PC-3 (cell line): ENCODE measurements at regions of chr3 and their contacts with region 1.

Region 1: DNA sequence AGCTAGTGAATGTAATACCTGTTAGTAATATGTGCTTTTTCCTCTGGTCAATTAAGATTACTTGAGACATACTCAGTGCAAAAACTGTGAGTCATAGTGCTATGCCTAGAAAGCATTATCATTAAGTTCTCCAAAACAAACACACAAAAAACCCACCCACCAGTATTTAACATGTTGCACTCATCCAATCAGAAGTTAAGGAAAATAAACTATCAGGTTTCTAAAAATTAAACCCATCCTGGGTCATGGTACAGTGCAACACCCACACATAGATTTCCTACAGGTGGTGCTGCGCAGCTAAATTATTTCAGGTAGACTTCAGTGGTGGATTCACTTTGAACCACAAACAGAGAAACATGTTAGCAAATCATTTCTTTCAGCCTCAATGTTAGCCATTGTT is 264.4 kb upstream of the VEPH1 start:
- DNase-seq: peak; percentile 68
- ATAC-seq: peak; percentile 82
- H3K4me3 ChIP-seq: no peak overlapping the region
- H3K27ac ChIP-seq: no peak overlapping the region
- H3K4me1 ChIP-seq: peaks cover 9% of the 10 kb centered on the region
- H3K27me3 ChIP-seq: no peaks in the 10 kb centered on the region
- CTCF ChIP-seq: peak; percentile 61

Region 2: GRCh38 chr3:157906627-157907026 is 139.0 kb after region 1 on chr3:
- CTCF ChIA-PET with region 1: no interaction called
- POLR2A ChIA-PET with region 1: no interaction called
- intact Hi-C with region 1: loop called (anchors 5 kb)
- DNase-seq: peak; percentile 57
- ATAC-seq: peak; percentile 98
- H3K4me3 ChIP-seq: no peak overlapping the region
- H3K27ac ChIP-seq: no peak overlapping the region
- H3K4me1 ChIP-seq: no peaks in the 10 kb centered on the region
- H3K27me3 ChIP-seq: no peaks in the 10 kb centered on the region
- CTCF ChIP-seq: peak; percentile 57